ENCODE measurements at regions of chr10 and their contacts with region 1.

Region 1: GRCh38 chr10:72107325-72108003 is 19.1 kb upstream of the SPOCK2 start:
- DNase-seq: no peak
- H3K4me3 ChIP-seq: no peak overlapping the region
- H3K4me3 Mint-ChIP-seq: no peak overlapping the region
- H3K27ac Mint-ChIP-seq: peak overlapping the region; percentile 82
- H3K4me1 ChIP-seq: peaks cover 33% of the 10 kb centered on the region
- H3K4me1 Mint-ChIP-seq: peaks cover 48% of the 10 kb centered on the region
- H3K27me3 ChIP-seq: no peaks in the 10 kb centered on the region
- H3K27me3 Mint-ChIP-seq: no peaks in the 10 kb centered on the region
- CTCF ChIP-seq: no peak

Region 2: GRCh38 chr10:72007246-72007892 is 100.1 kb before region 1 on chr10:
- CTCF ChIA-PET with region 1: no interaction called
- POLR2A ChIA-PET with region 1: interaction called, 12 read pairs
- intact Hi-C with region 1: no loop called
- DNase-seq: no peak
- H3K4me3 ChIP-seq: no peak overlapping the region
- H3K4me3 Mint-ChIP-seq: no peak overlapping the region
- H3K27ac Mint-ChIP-seq: no peak overlapping the region
- H3K4me1 ChIP-seq: peaks cover 11% of the 10 kb centered on the region; the same call in 1 of the 2 replicates
- H3K4me1 Mint-ChIP-seq: no peaks in the 10 kb centered on the region
- H3K27me3 ChIP-seq: no peaks in the 10 kb centered on the region
- H3K27me3 Mint-ChIP-seq: no peaks in the 10 kb centered on the region
- CTCF ChIP-seq: no peak

Region 3: DNA sequence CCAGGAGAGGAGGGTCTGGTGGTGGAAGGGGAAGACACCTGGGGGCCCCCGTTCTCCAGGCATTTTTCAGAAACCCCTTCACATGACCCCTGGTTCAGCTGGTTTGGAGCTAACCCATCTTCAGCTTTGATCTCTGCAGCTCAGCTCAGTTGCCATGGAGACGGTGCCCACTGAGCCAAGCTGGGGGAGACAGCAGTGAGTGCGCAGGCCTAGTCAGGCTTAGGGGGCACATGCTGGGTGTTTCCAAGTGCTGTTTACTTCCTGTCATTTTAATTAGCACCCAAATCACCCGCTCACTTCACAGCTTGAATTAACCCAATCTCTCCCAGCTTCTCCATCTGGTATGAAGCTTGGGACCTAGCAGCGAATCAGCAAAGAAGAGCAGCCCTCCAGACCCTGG is 28.1 kb before region 1 on chr10:
- CTCF ChIA-PET with region 1: no interaction called
- POLR2A ChIA-PET with region 1: no interaction called
- intact Hi-C with region 1: no loop called
- DNase-seq: peak in 1 of 2 experiments; percentile 33
- H3K4me3 ChIP-seq: no peak overlapping the region
- H3K4me3 Mint-ChIP-seq: no peak overlapping the region
- H3K27ac Mint-ChIP-seq: no peak overlapping the region
- H3K4me1 ChIP-seq: peaks cover 13% of the 10 kb centered on the region
- H3K4me1 Mint-ChIP-seq: peaks cover 18% of the 10 kb centered on the region
- H3K27me3 ChIP-seq: no peaks in the 10 kb centered on the region
- H3K27me3 Mint-ChIP-seq: no peaks in the 10 kb centered on the region
- CTCF ChIP-seq: no peak

Region 4: DNA sequence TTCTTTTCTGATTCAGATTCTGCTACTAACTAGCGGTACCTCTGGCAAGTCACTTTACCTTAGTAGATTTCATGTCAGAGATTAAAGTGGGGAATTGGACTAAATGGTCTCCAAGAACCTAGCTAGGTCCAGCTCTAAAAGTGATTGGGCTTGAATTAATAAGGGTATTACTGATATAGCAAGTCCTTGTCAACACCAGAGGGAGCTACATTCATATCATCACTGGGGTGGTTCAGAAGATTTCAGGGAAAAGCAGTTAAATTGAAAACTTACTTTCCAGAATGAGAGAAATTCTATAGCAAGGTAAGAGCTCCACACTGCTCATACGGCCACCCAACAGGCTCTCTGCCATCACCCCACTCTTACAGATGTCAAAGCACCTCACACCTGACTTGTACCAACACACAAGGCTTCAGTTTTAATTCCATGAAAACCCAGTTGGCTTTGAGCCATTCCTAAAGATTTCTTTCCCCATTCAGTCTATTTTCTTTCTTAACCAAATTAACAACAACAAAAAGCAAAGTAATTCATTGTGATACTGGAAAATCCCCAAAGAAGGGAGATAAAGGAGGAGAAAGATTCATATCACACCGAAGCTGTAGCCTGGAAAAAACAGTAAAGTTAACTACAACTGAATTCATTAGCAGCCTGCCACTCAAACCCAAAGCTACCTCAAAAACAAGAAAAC is 18.9 kb after region 1 on chr10:
- CTCF ChIA-PET with region 1: no interaction called
- POLR2A ChIA-PET with region 1: no interaction called
- intact Hi-C with region 1: no loop called
- DNase-seq: peak in 1 of 2 experiments; percentile 49
- H3K4me3 ChIP-seq: no peak overlapping the region
- H3K4me3 Mint-ChIP-seq: no peak overlapping the region
- H3K27ac Mint-ChIP-seq: no peak overlapping the region
- H3K4me1 ChIP-seq: peaks cover 7% of the 10 kb centered on the region; the same call in 1 of the 2 replicates
- H3K4me1 Mint-ChIP-seq: peaks cover 13% of the 10 kb centered on the region
- H3K27me3 ChIP-seq: no peaks in the 10 kb centered on the region
- H3K27me3 Mint-ChIP-seq: no peaks in the 10 kb centered on the region
- CTCF ChIP-seq: peak; percentile 60 to 69

Region 5: GRCh38 chr10:72204296-72204695 is 96.8 kb after region 1 on chr10:
- CTCF ChIA-PET with region 1: no interaction called
- POLR2A ChIA-PET with region 1: no interaction called
- intact Hi-C with region 1: no loop called
- DNase-seq: no peak
- H3K4me3 ChIP-seq: no peak overlapping the region
- H3K4me3 Mint-ChIP-seq: no peak overlapping the region
- H3K27ac Mint-ChIP-seq: no peak overlapping the region
- H3K4me1 ChIP-seq: no peaks in the 10 kb centered on the region
- H3K4me1 Mint-ChIP-seq: no peaks in the 10 kb centered on the region
- H3K27me3 ChIP-seq: no peaks in the 10 kb centered on the region
- H3K27me3 Mint-ChIP-seq: no peaks in the 10 kb centered on the region
- CTCF ChIP-seq: no peak

Measured in Caco-2 (cell line).